ENCODE measurements at regions of chrX and their contacts with region 1.

Region 1: GRCh38 chrX:4173743-4174142 is 460.3 kb upstream of the PRKX start:
- DNase-seq: no peak
- ATAC-seq: no peak
- H3K4me3 ChIP-seq: no peak overlapping the region
- H3K27ac ChIP-seq: no peak overlapping the region
- H3K4me1 ChIP-seq: no peaks in the 10 kb centered on the region
- H3K27me3 ChIP-seq: no peaks in the 10 kb centered on the region
- CTCF ChIP-seq: no peak

Region 2: DNA sequence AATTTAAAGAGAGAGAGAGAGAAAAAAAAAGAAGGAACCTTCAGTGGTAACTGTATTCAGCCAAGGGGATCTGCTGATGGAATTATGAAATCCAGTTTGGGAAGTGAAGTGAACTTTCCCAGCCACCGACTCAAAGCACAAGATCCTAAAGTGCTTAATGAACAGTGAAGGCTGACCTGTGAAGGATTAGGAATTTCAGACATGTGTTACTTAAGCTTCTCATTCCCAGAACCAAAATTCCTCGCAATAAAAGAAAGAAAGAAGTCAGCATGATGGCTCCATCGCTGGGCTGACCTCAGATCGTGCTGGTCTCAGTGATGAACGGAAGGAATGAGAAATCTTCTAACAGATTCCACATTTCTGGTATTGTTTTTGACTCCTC is 997.3 kb before region 1 on chrX:
- intact Hi-C with region 1: loop called in 1 of 10 experiments (anchors 5 kb)
- DNase-seq: no peak
- ATAC-seq: peak in 2 of 8 donors; percentile 30 to 38
- H3K4me3 ChIP-seq: no peak overlapping the region
- H3K27ac ChIP-seq: peak overlapping the region in 4 of 10 donors; percentile 13 to 48 (median 26)
- H3K4me1 ChIP-seq: no peaks in the 10 kb centered on the region
- H3K27me3 ChIP-seq: no peaks in the 10 kb centered on the region
- CTCF ChIP-seq: no peak

Region 3: GRCh38 chrX:4451591-4451990 is 277.8 kb after region 1 on chrX:
- intact Hi-C with region 1: no loop called
- DNase-seq: no peak
- ATAC-seq: no peak
- H3K4me3 ChIP-seq: no peak overlapping the region
- H3K27ac ChIP-seq: no peak overlapping the region
- H3K4me1 ChIP-seq: no peaks in the 10 kb centered on the region
- H3K27me3 ChIP-seq: no peaks in the 10 kb centered on the region
- CTCF ChIP-seq: no peak

Measured in heart right ventricle (tissue), 16 donors.